Stomach (tissue), 19 donors: ENCODE measurements at regions of chr17 and their contacts with region 1.

Region 1: DNA sequence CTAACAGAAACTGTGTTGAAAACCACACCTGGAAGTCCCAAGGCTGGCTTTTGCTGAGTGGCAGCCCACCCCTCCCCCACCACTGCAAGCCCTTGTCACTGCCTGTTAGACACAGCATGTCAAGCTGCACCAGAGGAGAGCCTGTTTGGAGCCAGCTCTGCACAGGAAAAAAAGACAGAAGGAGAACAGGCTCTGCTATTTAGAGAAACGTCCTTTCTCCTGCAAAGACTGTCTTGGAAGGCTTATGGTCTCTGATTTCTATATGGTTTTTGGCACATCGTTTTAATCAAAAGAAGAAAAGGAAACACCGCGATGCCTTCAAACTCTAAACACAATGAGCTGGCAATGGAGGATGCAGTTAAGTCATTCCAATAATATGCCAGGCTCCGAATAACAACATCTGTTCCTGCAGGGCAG is 275.5 kb downstream of the MAP2K4 start:
- DNase-seq: peak in 1 of 2 donors; percentile 16
- H3K4me3 ChIP-seq: no peak overlapping the region
- H3K27ac ChIP-seq: no peak overlapping the region
- H3K4me1 ChIP-seq: peaks cover 0 to 10% (median 0%) of the 10 kb centered on the region in 4 donors
- H3K27me3 ChIP-seq: no peaks in the 10 kb centered on the region
- CTCF ChIP-seq: no peak
- EP300 ChIP-seq: no peak
- POLR2A ChIP-seq: no peak

Region 2: GRCh38 chr17:12007466-12007865 is 288.8 kb before region 1 on chr17:
- intact Hi-C with region 1: no loop called
- DNase-seq: no peak
- H3K4me3 ChIP-seq: no peak overlapping the region
- H3K27ac ChIP-seq: no peak overlapping the region
- H3K4me1 ChIP-seq: no peaks in the 10 kb centered on the region
- H3K27me3 ChIP-seq: no peaks in the 10 kb centered on the region
- CTCF ChIP-seq: no peak
- EP300 ChIP-seq: no peak
- POLR2A ChIP-seq: no peak

Region 3: DNA sequence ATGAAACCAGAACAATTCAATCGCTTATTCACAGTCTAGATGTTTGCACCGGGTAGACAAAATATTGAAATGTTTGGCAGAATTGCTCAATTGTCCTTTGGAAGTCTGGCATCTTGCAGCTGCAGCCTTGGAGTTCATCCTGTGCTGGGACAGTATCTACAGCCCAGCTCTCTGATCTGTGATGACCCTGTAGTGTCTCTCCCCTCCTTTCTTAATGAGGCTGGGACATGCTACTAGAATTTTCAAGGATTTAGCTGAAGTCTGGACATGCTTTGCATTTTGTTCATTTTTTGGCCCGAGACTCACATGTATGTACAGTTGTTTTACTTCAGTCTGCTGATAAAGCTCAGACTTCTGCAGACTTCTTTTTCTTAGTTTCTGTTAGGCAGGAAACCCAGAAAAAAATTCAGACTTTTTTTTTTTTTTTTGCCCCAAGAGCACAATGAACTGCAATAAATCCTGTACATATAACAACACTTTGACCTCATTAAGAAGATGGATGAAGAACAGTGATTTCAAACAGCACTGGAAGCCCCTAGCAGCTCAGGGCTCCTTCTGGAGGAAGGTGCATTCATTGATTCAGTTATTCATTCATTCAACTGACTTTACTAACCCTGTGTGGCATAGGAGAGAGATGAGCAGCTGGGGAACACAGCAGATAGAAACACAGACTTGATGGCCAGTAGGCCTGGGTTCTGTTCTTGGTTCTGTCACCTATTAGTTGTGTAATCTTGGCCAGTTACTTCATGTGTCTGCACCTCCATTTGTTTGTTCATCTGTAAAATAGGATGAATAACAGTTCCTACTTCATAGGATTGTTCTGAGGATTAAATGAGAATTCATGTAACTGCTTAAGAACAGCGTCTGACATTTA is 65.5 kb before region 1 on chr17:
- intact Hi-C with region 1: loop called (anchors 10 kb)
- DNase-seq: peak in 1 of 2 donors; percentile 67
- H3K4me3 ChIP-seq: no peak overlapping the region
- H3K27ac ChIP-seq: peak overlapping the region in 2 of 5 donors; percentile 3 to 21
- H3K4me1 ChIP-seq: peaks cover 0 to 35% (median 6%) of the 10 kb centered on the region in 4 donors
- H3K27me3 ChIP-seq: no peaks in the 10 kb centered on the region
- CTCF ChIP-seq: no peak
- EP300 ChIP-seq: no peak
- POLR2A ChIP-seq: no peak